PC-3 (cell line): ENCODE measurements at regions of chr14 and their contacts with region 1.

Region 1: DNA sequence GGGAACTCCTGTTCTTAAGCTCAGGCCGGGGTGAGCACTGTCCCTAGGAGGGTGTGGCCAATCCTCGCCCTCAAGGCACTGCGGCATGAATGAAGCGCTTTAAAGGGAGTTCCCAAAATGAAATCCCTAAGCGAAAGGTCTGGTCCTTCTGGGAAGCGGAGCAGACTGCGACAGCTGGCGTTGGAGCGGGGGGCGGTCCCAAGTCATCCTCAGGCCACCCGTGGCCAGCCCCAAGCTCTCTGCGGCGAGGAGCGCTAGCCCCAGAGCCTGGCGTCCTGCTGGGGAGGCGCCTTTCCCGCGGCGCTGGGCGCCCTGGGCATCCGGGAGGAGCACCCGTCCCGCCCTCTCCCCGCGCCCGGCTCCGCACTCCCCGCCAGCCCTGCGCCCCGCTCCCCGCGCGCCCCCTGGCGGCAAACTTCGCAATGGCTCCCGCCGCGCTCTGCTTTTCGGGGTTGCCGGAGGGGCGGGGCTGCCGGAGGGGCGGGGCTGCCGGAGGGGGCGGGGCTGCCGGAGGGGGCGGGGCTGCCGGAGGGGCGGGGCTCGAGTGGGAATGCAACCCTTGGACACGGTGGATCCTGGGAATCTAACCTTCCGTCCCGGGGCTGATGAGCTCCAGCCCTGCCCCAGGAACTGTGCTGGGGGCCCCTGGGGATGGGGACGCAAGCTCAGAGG is 25.4 kb downstream of the ZBTB42 start:
- DNase-seq: peak; percentile 90
- ATAC-seq: peak; percentile 76
- H3K4me3 ChIP-seq: peak overlapping the region; percentile 83
- H3K27ac ChIP-seq: no peak overlapping the region
- H3K4me1 ChIP-seq: peaks cover 14% of the 10 kb centered on the region
- H3K27me3 ChIP-seq: no peaks in the 10 kb centered on the region
- CTCF ChIP-seq: peak; percentile 59

Region 2: DNA sequence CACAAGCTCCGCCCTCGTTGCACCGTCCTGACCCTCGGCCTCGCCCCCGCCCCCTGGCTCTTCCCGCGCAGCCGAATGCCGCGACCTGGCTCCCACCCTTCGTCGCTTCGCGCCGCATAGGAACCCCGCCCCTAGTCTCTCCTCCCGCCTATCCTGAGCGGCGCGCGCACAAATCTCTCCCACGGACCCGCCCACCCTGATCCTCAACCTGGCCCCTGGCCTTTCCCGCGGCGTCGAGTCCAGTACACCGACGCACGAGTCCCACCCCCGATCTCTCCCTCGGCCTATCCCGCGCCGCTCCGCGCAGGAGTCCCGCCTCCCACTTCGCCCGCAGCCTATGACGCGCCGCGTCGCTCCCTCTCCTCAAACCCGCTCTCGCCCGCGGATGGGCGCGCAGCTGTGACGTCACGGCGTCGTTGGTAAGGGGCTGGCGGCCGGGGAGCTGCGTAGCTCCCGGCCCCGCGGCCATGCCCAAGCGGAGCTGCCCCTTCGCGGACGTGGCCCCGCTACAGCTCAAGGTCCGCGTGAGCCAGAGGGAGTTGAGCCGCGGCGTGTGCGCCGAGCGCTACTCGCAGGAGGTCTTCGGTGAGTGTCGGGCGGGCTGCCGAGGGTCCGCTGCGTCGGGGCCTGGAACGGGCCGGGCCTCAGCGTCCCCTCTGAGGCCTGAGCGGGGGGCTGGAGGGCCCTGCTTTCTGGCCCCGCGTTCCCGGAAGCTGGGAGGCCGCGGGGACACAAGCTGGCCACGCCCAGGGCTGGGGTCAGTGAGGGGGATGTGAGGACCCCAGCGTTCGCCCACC is 73.4 kb before region 1 on chr14 and contains the start of gene SIVA1:
- CTCF ChIA-PET with region 1: interaction called, 3 read pairs
- POLR2A ChIA-PET with region 1: interaction called, 18 read pairs
- intact Hi-C with region 1: no loop called
- DNase-seq: peak; percentile 99
- ATAC-seq: peak; percentile 91
- H3K4me3 ChIP-seq: peak within 1 kb of the TSS; percentile 100
- H3K27ac ChIP-seq: peak within 1 kb of the TSS; percentile 54
- H3K4me1 ChIP-seq: peaks cover 32% of the 10 kb centered on the region
- H3K27me3 ChIP-seq: no peaks in the 10 kb centered on the region
- CTCF ChIP-seq: no peak
- total RNA-seq, gene SIVA1: 375 and 519 TPM in 2 replicates

Region 3: GRCh38 chr14:104768437-104769323 is 57.6 kb before region 1 on chr14:
- CTCF ChIA-PET with region 1: interaction called, 21 read pairs
- POLR2A ChIA-PET with region 1: no interaction called
- intact Hi-C with region 1: loop called (anchors 1 kb)
- DNase-seq: peak; percentile 85
- ATAC-seq: peak; percentile 93
- H3K4me3 ChIP-seq: no peak overlapping the region
- H3K27ac ChIP-seq: no peak overlapping the region
- H3K4me1 ChIP-seq: no peaks in the 10 kb centered on the region
- H3K27me3 ChIP-seq: no peaks in the 10 kb centered on the region
- CTCF ChIP-seq: peak; percentile 70

Region 4: GRCh38 chr14:104803280-104803915 is 22.9 kb before region 1 on chr14:
- CTCF ChIA-PET with region 1: interaction called, 13 read pairs
- POLR2A ChIA-PET with region 1: no interaction called
- intact Hi-C with region 1: no loop called
- DNase-seq: no peak
- ATAC-seq: no peak
- H3K4me3 ChIP-seq: no peak overlapping the region
- H3K27ac ChIP-seq: no peak overlapping the region
- H3K4me1 ChIP-seq: peaks cover 38% of the 10 kb centered on the region
- H3K27me3 ChIP-seq: no peaks in the 10 kb centered on the region
- CTCF ChIP-seq: no peak

Region 5: DNA sequence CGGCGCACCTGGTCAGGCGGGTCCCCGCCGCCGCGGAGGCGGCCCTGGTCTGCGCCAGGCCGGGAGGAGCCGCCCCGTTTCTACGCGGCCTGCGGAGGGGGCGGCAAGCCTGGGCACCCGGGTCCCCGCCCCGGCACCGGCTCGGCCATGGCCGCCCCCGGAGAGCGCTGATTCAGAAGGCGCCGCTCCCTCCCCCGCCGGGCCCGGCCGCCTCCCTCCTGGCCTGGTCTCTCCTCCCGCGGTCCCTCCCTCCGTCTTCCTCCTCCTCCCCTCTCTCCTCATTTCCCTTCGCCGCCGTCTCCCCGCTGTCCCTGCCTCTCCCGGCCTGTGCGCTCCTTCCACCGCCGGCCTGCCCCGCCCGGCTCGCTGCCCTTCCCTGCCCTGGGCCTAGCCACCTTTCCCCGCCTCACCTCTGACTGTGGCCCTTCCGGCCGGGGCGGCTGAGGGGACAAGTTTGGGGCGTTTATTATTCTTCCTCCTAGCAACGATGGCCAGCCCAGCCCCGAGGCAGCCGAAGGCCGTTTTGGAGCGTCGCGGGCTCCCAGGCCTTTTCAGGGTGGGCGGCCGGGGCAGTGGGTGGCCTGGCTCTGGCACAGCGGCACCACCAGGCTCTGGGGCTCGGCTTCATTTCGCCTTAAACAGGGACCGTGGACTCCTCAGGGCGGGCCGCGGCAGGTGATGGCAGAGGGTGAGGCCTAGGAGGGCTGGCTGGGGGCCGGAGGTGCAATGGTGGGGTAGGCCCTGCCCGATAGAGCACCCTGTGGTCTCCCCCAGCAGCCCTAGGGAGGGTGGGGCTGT is 39.5 kb after region 1 on chr14:
- CTCF ChIA-PET with region 1: interaction called, 4 read pairs
- POLR2A ChIA-PET with region 1: no interaction called
- intact Hi-C with region 1: loop called (anchors 2 kb)
- DNase-seq: peak; percentile 61
- ATAC-seq: peak; percentile 65
- H3K4me3 ChIP-seq: peak overlapping the region; percentile 91
- H3K27ac ChIP-seq: peak overlapping the region; percentile 21
- H3K4me1 ChIP-seq: peaks cover 21% of the 10 kb centered on the region
- H3K27me3 ChIP-seq: no peaks in the 10 kb centered on the region
- CTCF ChIP-seq: no peak

Region 6: DNA sequence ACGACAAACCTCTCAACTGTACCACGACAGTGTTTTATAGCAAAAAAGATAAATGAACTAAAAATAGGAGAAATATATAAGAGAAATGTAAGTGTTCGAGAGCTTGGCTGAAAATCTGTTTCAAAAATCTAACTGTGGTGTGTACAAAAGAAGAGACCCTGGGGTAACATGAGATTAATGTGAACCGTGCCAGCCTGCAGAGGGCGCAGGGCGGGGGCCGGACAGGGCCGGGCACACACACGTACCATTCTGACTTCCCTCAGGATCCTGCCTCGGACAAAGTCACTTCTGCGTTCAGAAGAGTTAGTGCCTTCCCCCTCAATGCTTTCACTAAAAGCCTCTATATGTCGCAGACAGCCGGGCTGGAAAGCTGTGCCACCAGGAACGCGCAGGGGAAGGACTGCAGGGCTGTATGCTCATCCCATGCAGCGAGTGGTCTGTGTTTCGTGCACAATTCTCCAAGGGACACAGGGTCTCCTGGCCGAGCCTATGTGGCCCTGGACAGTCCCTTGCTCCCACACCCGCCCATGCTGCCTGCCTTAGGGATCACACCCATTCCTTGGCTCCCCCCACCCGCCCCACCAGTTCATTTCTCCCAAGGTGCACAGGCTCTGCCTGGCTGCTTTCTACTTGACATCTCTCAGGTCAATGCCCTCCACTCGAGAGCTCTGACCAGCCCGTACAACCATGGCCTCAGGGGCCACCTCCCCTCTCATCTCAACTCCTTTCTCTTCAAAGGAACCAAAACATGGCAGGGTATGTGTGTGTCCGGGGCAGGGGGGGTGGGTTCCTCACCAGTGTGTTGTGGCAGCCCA is 186.1 kb after region 1 on chr14:
- CTCF ChIA-PET with region 1: no interaction called
- POLR2A ChIA-PET with region 1: no interaction called
- intact Hi-C with region 1: no loop called
- DNase-seq: no peak
- ATAC-seq: 0 out of 2 replicates have a peak, but pooled peaks have one; percentile 9
- H3K4me3 ChIP-seq: no peak overlapping the region
- H3K27ac ChIP-seq: no peak overlapping the region
- H3K4me1 ChIP-seq: peaks cover 32% of the 10 kb centered on the region
- H3K27me3 ChIP-seq: no peaks in the 10 kb centered on the region
- CTCF ChIP-seq: peak; percentile 58